CD4-positive, alpha-beta T cell (primary cell): ENCODE measurements at regions of chr12 and their contacts with region 1.

Region 1: DNA sequence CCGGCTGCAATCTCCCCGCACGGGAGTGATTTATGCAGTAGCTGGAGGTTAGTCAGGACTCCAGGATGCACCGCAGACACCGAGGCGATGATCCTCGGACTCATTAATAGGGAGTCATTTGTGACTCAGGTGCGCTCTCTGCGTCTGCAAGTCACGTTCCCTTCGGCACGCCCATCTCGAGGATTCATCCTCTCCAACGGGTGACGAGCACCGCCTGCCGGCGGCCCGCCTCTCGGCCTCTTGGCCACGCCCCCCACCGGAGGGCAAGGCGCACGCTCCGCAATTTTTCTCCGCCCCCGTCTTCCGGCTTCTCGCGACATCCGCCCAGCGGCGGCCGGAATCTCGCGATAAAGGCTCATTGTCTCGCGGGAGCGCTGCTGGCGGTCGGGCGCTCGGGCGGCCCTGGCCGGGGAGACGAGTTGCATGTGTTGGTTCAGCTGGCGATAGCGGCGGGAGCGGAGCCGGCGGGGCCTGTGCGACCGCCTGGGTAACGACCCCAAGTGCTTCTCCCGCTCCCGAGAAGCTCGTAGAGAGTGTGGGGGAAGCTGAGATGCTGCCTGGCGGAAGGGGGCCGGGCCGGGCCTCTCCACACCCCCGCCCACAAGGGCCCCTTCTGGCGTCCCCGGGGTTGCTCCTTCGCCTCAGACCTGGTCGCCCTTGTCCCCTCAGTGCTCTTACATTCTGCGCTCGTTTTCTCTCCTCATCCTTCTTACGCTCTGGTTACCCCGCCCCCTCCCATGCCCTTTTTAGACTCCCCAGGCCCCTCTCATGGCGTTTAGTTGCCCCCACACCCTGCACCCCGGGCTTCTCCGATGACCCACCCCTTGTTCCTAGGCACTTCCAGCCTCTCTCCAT is at the start of gene DENR:
- DNase-seq: peak; percentile 99 to 100 (median 99)
- ATAC-seq: peak; percentile 92
- H3K4me3 ChIP-seq: peak within 1 kb of the TSS; percentile 89
- H3K4me3 Mint-ChIP-seq: peak within 1 kb of the TSS; percentile 96
- H3K27ac ChIP-seq: peak within 1 kb of the TSS; percentile 86 to 89
- H3K27ac Mint-ChIP-seq: peak within 1 kb of the TSS; percentile 97
- H3K4me1 ChIP-seq: peaks cover 21% of the 10 kb centered on the region
- H3K4me1 Mint-ChIP-seq: peaks cover 57% of the 10 kb centered on the region
- H3K27me3 ChIP-seq: no peaks in the 10 kb centered on the region
- H3K27me3 Mint-ChIP-seq: no peaks in the 10 kb centered on the region
- CTCF ChIP-seq: peak; percentile 76
- total RNA-seq, gene DENR: 29.9 to 31.1 TPM

Region 2: DNA sequence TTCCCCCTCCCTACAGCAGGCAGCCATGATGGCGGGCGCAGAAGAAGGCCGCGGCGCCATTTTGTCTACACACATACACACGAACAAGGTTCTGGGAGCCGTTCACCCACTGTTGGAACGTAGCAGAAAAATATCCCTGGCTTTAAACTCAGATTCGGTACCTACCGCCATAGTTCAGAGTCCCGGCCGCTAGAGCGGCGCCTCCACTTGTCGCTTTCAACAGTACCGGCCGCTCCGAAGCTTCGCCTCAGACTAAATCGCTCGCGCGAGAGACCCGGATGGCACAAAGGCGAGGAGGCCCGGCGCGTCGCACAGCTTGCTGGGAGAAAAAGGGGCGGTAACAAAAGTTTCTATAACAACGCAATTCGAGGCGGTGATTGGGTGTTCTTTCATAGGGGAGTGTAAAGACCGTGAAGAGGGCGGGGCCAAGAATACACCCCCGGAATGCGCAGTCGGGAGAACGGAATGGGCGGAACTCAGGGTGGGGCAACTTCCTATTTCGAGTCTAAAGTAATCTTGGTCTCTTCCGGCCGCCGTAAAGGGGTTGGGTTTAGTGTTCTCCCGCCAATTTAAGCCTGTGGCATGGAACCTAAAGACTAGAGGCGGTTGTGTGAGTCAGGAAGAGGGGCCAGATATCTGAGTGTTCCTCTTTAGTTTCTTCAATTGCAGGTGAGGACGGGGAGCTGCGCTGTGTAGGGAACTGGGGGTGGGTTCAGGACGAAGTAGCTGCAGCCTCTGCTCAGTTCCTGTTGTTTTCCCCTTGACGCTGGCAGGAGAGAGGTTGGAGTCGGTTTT is 225.8 kb before region 1 on chr12 and contains the starts of genes KNTC1 and RSRC2:
- CTCF ChIA-PET with region 1: interaction called, 6 read pairs
- POLR2A ChIA-PET with region 1: interaction called, 25 read pairs
- intact Hi-C with region 1: loop called (anchors 1 to 2 kb)
- DNase-seq: peak; percentile 93 to 100 (median 96)
- ATAC-seq: peak; percentile 90
- H3K4me3 ChIP-seq: peak within 1 kb of the TSS; percentile 97
- H3K4me3 Mint-ChIP-seq: no peak within 1 kb of the TSS
- H3K27ac ChIP-seq: peak within 1 kb of the TSS; percentile 98 to 99
- H3K27ac Mint-ChIP-seq: no peak within 1 kb of the TSS
- H3K4me1 ChIP-seq: peaks cover 21% of the 10 kb centered on the region
- H3K4me1 Mint-ChIP-seq: peaks cover 36% of the 10 kb centered on the region
- H3K27me3 ChIP-seq: no peaks in the 10 kb centered on the region
- H3K27me3 Mint-ChIP-seq: no peaks in the 10 kb centered on the region
- CTCF ChIP-seq: no peak
- total RNA-seq, gene KNTC1: 23.3 to 23.8 TPM
- total RNA-seq, gene RSRC2: 339 to 341 TPM

Region 3: DNA sequence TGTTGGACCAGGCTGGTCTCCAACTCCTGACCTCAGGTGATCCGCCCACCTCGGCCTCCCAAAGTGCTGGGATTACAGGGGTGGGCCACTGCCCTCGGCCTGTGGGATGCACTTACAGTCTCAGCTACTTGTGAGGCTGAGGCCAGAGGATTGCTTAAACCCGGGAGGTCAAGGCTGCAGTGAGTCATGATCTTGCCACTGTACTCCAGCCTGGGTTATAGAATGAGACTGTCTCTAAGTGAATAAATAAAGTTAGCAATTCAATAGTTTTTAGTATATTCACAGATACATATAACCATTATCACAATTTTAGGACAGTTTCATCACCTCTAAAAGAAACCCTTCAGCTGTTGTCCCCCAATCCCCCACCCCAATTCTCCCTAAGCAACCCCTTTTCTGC is 110.7 kb before region 1 on chr12:
- CTCF ChIA-PET with region 1: interaction called, 7 read pairs
- POLR2A ChIA-PET with region 1: interaction called, 3 read pairs
- intact Hi-C with region 1: loop called (anchors 1 to 2 kb)
- DNase-seq: peak in 1 of 14 experiments; percentile 28
- ATAC-seq: no peak
- H3K4me3 ChIP-seq: no peak overlapping the region
- H3K4me3 Mint-ChIP-seq: no peak overlapping the region
- H3K27ac ChIP-seq: no peak overlapping the region
- H3K27ac Mint-ChIP-seq: no peak overlapping the region
- H3K4me1 ChIP-seq: no peaks in the 10 kb centered on the region
- H3K4me1 Mint-ChIP-seq: no peaks in the 10 kb centered on the region
- H3K27me3 ChIP-seq: no peaks in the 10 kb centered on the region
- H3K27me3 Mint-ChIP-seq: no peaks in the 10 kb centered on the region
- CTCF ChIP-seq: no peak

Region 4: DNA sequence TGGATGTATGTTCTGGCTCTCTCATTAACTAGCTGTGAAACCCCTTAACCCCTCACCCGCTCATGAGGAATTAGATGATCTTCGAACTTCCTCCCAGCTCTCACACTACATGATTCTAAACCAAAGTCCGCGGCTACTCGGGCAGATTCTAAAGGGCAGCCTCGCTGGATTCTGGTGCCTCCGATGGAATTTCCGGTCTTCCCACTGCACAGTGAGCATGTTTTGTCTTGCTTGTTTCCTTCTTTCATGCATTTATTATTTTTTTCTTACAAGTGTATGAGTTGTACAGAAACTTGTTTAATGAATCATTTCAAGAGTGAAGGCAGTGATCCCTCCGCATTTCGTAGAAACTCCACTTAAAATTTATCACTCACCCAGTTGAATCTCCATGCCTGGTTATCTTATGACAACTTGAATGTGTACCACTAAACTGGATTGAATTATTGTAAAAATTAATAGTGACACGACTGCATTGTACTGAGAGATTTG is 31.6 kb before region 1 on chr12:
- CTCF ChIA-PET with region 1: no interaction called
- POLR2A ChIA-PET with region 1: no interaction called
- intact Hi-C with region 1: no loop called
- DNase-seq: no peak
- ATAC-seq: no peak
- H3K4me3 ChIP-seq: no peak overlapping the region
- H3K4me3 Mint-ChIP-seq: no peak overlapping the region
- H3K27ac ChIP-seq: no peak overlapping the region
- H3K27ac Mint-ChIP-seq: no peak overlapping the region
- H3K4me1 ChIP-seq: no peaks in the 10 kb centered on the region
- H3K4me1 Mint-ChIP-seq: peaks cover 5% of the 10 kb centered on the region
- H3K27me3 ChIP-seq: no peaks in the 10 kb centered on the region
- H3K27me3 Mint-ChIP-seq: no peaks in the 10 kb centered on the region
- CTCF ChIP-seq: no peak

Region 5: GRCh38 chr12:123388177-123388947 is 635.7 kb after region 1 on chr12:
- CTCF ChIA-PET with region 1: no interaction called
- POLR2A ChIA-PET with region 1: no interaction called
- intact Hi-C with region 1: loop called in 1 of 2 experiments (anchors 10 kb)
- DNase-seq: peak; percentile 34 to 88 (median 67)
- ATAC-seq: peak; percentile 61
- H3K4me3 ChIP-seq: peak overlapping the region; percentile 87
- H3K4me3 Mint-ChIP-seq: peak overlapping the region; percentile 91
- H3K27ac ChIP-seq: peak overlapping the region; percentile 53 to 76
- H3K27ac Mint-ChIP-seq: peak overlapping the region; percentile 73
- H3K4me1 ChIP-seq: peaks cover 58% of the 10 kb centered on the region
- H3K4me1 Mint-ChIP-seq: peaks cover 52% of the 10 kb centered on the region
- H3K27me3 ChIP-seq: no peaks in the 10 kb centered on the region
- H3K27me3 Mint-ChIP-seq: no peaks in the 10 kb centered on the region
- CTCF ChIP-seq: no peak